Breast epithelium (tissue), 4 donors: ENCODE measurements at regions of chr3 and their contacts with region 1.

Region 1: DNA sequence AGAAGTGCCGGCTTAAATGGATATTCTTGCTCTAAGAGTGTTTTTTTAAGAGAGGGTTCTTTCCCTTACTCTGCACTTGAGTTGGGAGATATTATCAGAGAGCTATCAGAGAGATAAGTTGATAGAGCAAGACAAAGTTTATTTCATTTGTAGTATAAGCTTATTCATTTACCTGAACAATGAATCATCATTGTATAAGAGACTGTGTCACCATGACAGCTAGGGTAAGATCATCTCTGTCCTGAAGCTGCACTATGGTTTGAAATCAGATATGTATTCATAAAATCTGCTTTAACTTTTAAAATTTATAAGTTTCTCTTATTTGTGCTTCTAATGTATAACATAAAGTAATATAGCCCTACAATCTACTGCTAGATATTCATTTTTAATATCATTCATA is 128.1 kb upstream of the ARL6 start:
- DNase-seq: no peak
- H3K4me3 ChIP-seq: no peak overlapping the region
- H3K27ac ChIP-seq: no peak overlapping the region
- H3K4me1 ChIP-seq: no peaks in the 10 kb centered on the region
- H3K27me3 ChIP-seq: no peaks in the 10 kb centered on the region
- CTCF ChIP-seq: no peak
- POLR2A ChIP-seq: no peak

Region 2: DNA sequence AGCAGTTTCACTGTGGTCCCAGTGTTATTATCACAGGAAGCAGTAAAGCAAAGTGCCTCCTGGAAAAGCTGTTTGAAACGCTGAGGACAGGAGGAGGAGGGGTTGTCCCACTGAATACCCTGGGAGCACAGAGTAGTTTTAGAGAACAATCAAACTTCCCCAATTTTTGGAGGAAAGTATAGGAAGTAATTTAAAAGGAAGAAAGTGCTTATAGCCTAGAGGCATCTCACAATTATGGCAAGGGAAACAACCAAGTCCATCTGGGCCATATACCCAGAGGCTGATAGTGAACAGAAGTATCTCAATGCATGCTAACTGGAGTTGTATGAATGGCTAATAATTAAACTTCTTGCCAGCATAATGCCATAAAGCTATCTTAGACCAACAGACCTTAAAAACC is 959.3 kb before region 1 on chr3:
- intact Hi-C with region 1: loop called (anchors 5 kb)
- DNase-seq: no peak
- H3K4me3 ChIP-seq: no peak overlapping the region
- H3K27ac ChIP-seq: no peak overlapping the region
- H3K4me1 ChIP-seq: no peaks in the 10 kb centered on the region
- H3K27me3 ChIP-seq: no peaks in the 10 kb centered on the region
- CTCF ChIP-seq: no peak
- POLR2A ChIP-seq: no peak

Region 3: DNA sequence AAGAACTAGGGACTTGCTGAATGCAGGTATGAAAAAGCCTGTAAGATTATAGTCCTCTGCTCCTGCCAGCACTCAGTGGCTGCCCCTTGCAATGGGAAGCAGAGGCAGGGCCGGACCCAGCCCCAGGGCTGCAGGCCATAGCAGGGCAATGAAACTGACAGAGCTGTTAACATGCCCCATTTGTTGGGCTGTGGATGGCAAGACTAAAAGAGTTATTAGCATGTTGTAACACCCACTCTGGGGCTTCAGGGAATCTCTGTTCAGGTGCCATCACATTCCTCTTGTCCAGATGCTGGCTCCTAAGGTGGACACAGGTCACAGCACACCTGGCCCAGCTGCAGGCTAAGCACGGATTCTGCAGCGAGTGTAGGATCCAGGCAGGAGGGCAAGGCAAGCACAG is 638.4 kb after region 1 on chr3:
- intact Hi-C with region 1: loop called (anchors 5 kb)
- DNase-seq: no peak
- H3K4me3 ChIP-seq: no peak overlapping the region
- H3K27ac ChIP-seq: no peak overlapping the region
- H3K4me1 ChIP-seq: no peaks in the 10 kb centered on the region
- H3K27me3 ChIP-seq: no peaks in the 10 kb centered on the region
- CTCF ChIP-seq: no peak
- POLR2A ChIP-seq: no peak